SK-N-SH (cell line): ENCODE measurements at regions of chr7 and their contacts with region 1.

Region 1: DNA sequence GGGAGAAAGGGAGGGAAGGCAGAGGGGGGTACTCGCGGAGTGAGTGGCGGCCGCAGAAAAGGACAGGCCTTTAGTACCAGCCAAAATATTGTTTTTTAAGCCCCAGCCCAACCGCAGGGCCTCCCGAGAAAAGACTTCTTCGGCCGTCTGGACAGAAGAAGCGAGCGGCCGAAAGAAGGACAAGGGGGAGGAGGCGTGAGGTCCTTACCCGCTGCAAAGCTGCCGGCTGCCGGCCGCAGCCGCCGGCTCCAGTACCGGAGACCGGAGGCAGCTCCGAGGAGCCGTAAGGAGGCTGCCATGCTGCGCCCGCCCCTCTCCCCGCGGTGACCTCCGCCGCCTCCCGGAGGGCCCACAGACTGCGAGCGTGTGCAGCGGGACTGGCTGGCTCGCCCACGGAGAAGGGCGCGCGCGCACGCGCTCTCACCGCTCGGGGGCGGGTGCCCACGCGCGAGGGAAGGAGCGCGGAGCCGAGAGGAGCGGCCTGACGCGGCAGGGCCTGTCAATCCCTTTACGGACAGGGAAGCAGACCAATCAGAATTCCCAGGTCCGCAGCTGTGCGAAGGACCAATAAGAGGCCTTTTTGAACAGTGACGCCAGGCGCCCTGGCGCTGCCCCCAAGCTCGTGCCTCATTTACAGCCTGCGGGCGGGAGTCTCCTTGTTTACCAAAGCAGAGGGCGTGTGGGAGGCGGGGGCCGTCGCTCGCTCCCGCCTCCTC is at the start of gene HIBADH:
- DNase-seq: peak; percentile 98
- H3K4me3 ChIP-seq: peak within 1 kb of the TSS; percentile 81 to 100
- H3K27ac ChIP-seq: peak within 1 kb of the TSS; percentile 80 to 88
- H3K4me1 ChIP-seq: peaks cover 6 to 10% of the 10 kb centered on the region in 2 experiments; a peak in 2 of 4 replicates
- H3K27me3 ChIP-seq: no peaks in the 10 kb centered on the region
- CTCF ChIP-seq: peak; percentile 31; the same call in 1 of the 2 replicates
- EP300 ChIP-seq: 0 out of 4 replicates have a peak, but pooled peaks of 1 of the 2 experiments have one; percentile 12
- RAD21 ChIP-seq: no peak; the same call in 1 of the 2 replicates
- polyA plus RNA-seq, gene HIBADH: 71.8 and 84.6 TPM in 2 replicates

Region 2: GRCh38 chr7:27723085-27723484 is 60.4 kb after region 1 on chr7:
- CTCF ChIA-PET with region 1: interaction called, 10 read pairs
- POLR2A ChIA-PET with region 1: no interaction called
- DNase-seq: peak; percentile 60
- H3K4me3 ChIP-seq: no peak overlapping the region
- H3K27ac ChIP-seq: no peak overlapping the region
- H3K4me1 ChIP-seq: peaks cover 0 to 6% of the 10 kb centered on the region in 2 experiments; a peak in 1 of 4 replicates
- H3K27me3 ChIP-seq: no peaks in the 10 kb centered on the region
- CTCF ChIP-seq: peak; percentile 59
- EP300 ChIP-seq: no peak
- RAD21 ChIP-seq: peak; percentile 65

Region 3: GRCh38 chr7:27739909-27740448 is 77.3 kb after region 1 on chr7 and contains the start of gene TAX1BP1:
- CTCF ChIA-PET with region 1: interaction called, 12 read pairs
- POLR2A ChIA-PET with region 1: interaction called, 6 read pairs
- DNase-seq: peak; percentile 99
- H3K4me3 ChIP-seq: peak within 1 kb of the TSS; percentile 83 to 99
- H3K27ac ChIP-seq: peak within 1 kb of the TSS; percentile 94 to 97
- H3K4me1 ChIP-seq: peaks cover 13 to 14% of the 10 kb centered on the region in 2 experiments; a peak in 2 of 4 replicates
- H3K27me3 ChIP-seq: no peaks in the 10 kb centered on the region
- CTCF ChIP-seq: no peak
- EP300 ChIP-seq: no peak; a peak in 1 of 4 replicates
- RAD21 ChIP-seq: no peak
- polyA plus RNA-seq, gene TAX1BP1: 70.3 and 108 TPM in 2 replicates